Caco-2 (cell line): ENCODE measurements at regions of chr6 and their contacts with region 1.

Region 1: GRCh38 chr6:137313928-137314855 is 95.0 kb upstream of the IFNGR1 start:
- DNase-seq: peak; percentile 60 to 62
- H3K4me3 ChIP-seq: no peak overlapping the region
- H3K4me3 Mint-ChIP-seq: no peak overlapping the region
- H3K27ac Mint-ChIP-seq: no peak overlapping the region
- H3K4me1 ChIP-seq: no peaks in the 10 kb centered on the region; the same call in 1 of the 2 replicates
- H3K4me1 Mint-ChIP-seq: no peaks in the 10 kb centered on the region
- H3K27me3 ChIP-seq: no peaks in the 10 kb centered on the region
- H3K27me3 Mint-ChIP-seq: no peaks in the 10 kb centered on the region
- CTCF ChIP-seq: peak; percentile 78

Region 2: DNA sequence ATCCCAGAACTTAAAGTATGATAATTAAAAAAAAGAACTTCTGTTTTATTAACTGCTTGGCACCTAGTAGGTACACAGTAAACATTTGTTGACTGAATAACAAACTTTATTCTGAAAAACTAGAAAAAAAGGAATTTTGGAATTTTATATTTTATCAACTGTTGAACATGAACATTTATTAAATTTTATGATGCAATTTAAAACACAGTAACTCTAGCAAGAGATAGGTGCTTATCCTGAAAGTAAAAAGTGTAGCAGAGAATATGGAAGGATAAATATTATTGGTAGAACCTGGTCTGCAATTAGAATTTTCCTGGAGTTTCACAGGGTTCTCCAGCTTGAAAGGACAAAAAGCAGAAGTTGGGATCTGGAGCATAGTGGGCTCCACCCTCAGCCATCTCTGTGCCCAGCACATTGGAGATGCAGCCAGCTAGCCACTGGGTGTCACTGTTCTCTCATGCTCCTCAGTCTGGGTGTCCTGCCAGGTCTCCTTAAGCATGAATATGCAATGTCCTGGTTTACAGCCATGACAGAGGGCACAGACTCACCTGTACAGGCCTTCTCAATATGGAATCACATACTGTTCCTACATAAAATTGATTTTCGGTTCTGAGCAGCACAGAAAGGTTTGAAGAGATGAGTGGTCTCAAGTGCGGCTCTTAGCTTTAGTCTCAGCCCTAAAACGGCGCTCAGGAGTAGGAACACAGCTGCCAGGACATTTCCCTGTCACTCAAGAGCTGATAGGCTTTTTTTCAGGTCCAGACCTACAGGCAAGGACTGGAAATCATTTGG is 237.7 kb before region 1 on chr6:
- CTCF ChIA-PET with region 1: interaction called, 4 read pairs
- POLR2A ChIA-PET with region 1: no interaction called
- intact Hi-C with region 1: loop called (anchors 1 kb)
- DNase-seq: peak; percentile 80 to 83
- H3K4me3 ChIP-seq: no peak overlapping the region
- H3K4me3 Mint-ChIP-seq: no peak overlapping the region
- H3K27ac Mint-ChIP-seq: no peak overlapping the region
- H3K4me1 ChIP-seq: no peaks in the 10 kb centered on the region
- H3K4me1 Mint-ChIP-seq: no peaks in the 10 kb centered on the region
- H3K27me3 ChIP-seq: no peaks in the 10 kb centered on the region
- H3K27me3 Mint-ChIP-seq: peaks cover 6% of the 10 kb centered on the region
- CTCF ChIP-seq: peak; percentile 68 to 85

Region 3: GRCh38 chr6:137218917-137219663 is 95.1 kb before region 1 on chr6 and contains the start of gene IFNGR1:
- CTCF ChIA-PET with region 1: interaction called, 3 read pairs
- POLR2A ChIA-PET with region 1: no interaction called
- intact Hi-C with region 1: loop called (anchors 1 kb)
- DNase-seq: peak; percentile 97 to 98
- H3K4me3 ChIP-seq: peak within 1 kb of the TSS; percentile 75
- H3K4me3 Mint-ChIP-seq: peak within 1 kb of the TSS; percentile 99
- H3K27ac Mint-ChIP-seq: peak within 1 kb of the TSS; percentile 96
- H3K4me1 ChIP-seq: peaks cover 19% of the 10 kb centered on the region
- H3K4me1 Mint-ChIP-seq: peaks cover 33% of the 10 kb centered on the region
- H3K27me3 ChIP-seq: no peaks in the 10 kb centered on the region
- H3K27me3 Mint-ChIP-seq: no peaks in the 10 kb centered on the region
- CTCF ChIP-seq: no peak
- total RNA-seq, gene IFNGR1: 56.9 and 58.0 TPM in 2 replicates

Region 4: DNA sequence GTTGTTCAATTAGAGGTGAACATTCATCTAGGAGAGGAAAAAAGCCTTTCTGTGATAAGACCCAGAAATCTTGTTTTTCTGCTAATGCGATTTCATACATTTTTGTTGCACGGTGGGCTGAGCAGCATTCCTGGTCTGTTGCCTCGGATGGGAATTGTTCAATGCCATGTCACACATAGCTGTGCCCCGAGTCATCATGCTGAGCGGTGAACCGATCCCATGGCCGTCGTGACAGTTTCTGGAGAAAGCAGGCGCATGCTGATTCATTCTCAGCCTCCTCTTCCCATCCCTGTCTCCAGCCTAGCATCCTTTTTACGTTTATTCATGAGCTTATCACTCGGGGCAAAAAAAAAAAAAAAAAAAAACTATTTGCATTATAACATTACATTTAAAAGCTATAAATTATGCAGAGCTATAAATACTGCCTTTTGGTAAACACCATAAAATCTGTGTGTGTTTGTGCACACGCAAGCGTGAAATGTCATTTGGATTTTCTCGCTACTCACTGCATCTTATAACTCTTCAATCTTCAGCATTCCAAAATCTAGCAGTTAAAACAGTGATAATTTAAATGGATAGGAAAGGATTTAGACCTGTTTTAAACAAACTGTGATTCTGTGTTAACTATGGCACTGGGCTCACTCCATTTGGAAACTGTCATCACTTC is 36.1 kb before region 1 on chr6:
- CTCF ChIA-PET with region 1: interaction called, 3 read pairs
- POLR2A ChIA-PET with region 1: no interaction called
- intact Hi-C with region 1: loop called (anchors 2 kb)
- DNase-seq: peak; percentile 71 to 75
- H3K4me3 ChIP-seq: no peak overlapping the region
- H3K4me3 Mint-ChIP-seq: no peak overlapping the region
- H3K27ac Mint-ChIP-seq: no peak overlapping the region
- H3K4me1 ChIP-seq: peaks cover 18% of the 10 kb centered on the region
- H3K4me1 Mint-ChIP-seq: peaks cover 6% of the 10 kb centered on the region
- H3K27me3 ChIP-seq: no peaks in the 10 kb centered on the region
- H3K27me3 Mint-ChIP-seq: no peaks in the 10 kb centered on the region
- CTCF ChIP-seq: no peak

Region 5: GRCh38 chr6:137387096-137387764 is 73.0 kb after region 1 on chr6:
- CTCF ChIA-PET with region 1: no interaction called
- POLR2A ChIA-PET with region 1: no interaction called
- intact Hi-C with region 1: no loop called
- DNase-seq: no peak
- H3K4me3 ChIP-seq: no peak overlapping the region
- H3K4me3 Mint-ChIP-seq: no peak overlapping the region
- H3K27ac Mint-ChIP-seq: no peak overlapping the region
- H3K4me1 ChIP-seq: no peaks in the 10 kb centered on the region
- H3K4me1 Mint-ChIP-seq: no peaks in the 10 kb centered on the region
- H3K27me3 ChIP-seq: no peaks in the 10 kb centered on the region
- H3K27me3 Mint-ChIP-seq: no peaks in the 10 kb centered on the region
- CTCF ChIP-seq: no peak

Region 6: DNA sequence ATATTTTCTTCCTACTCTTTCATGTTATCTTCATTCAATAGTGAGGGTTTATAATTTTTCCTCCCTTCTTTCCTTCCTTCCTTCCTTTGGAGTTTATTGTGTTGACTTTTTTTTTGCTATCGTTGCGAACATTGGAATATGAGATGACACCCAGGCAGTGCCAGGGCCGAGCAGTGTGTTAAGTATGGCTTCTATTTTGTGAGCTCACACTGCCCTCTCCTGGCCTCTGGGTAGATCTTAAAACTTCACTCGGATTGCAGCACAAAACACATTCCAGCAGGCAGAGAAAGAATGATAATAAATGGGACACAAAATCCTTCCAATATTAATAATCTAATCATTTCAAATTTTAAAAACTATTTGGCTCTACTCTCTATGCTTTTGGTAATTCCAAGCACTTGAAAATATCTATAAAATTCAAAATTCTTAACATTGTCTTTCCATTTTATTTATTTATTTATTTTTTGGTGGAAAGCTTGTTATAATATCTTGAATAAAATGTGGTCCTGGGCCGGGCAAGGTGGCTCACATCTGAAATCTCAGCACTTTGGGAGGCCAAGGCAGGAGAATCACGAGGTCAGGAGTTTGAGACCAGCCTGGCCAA is 327.4 kb after region 1 on chr6:
- CTCF ChIA-PET with region 1: interaction called, 7 read pairs
- POLR2A ChIA-PET with region 1: no interaction called
- intact Hi-C with region 1: loop called (anchors 1 kb)
- DNase-seq: peak; percentile 67 to 69
- H3K4me3 ChIP-seq: no peak overlapping the region
- H3K4me3 Mint-ChIP-seq: no peak overlapping the region
- H3K27ac Mint-ChIP-seq: no peak overlapping the region
- H3K4me1 ChIP-seq: peaks cover 20% of the 10 kb centered on the region
- H3K4me1 Mint-ChIP-seq: peaks cover 4% of the 10 kb centered on the region
- H3K27me3 ChIP-seq: no peaks in the 10 kb centered on the region
- H3K27me3 Mint-ChIP-seq: no peaks in the 10 kb centered on the region
- CTCF ChIP-seq: peak; percentile 65 to 74

Region 7: DNA sequence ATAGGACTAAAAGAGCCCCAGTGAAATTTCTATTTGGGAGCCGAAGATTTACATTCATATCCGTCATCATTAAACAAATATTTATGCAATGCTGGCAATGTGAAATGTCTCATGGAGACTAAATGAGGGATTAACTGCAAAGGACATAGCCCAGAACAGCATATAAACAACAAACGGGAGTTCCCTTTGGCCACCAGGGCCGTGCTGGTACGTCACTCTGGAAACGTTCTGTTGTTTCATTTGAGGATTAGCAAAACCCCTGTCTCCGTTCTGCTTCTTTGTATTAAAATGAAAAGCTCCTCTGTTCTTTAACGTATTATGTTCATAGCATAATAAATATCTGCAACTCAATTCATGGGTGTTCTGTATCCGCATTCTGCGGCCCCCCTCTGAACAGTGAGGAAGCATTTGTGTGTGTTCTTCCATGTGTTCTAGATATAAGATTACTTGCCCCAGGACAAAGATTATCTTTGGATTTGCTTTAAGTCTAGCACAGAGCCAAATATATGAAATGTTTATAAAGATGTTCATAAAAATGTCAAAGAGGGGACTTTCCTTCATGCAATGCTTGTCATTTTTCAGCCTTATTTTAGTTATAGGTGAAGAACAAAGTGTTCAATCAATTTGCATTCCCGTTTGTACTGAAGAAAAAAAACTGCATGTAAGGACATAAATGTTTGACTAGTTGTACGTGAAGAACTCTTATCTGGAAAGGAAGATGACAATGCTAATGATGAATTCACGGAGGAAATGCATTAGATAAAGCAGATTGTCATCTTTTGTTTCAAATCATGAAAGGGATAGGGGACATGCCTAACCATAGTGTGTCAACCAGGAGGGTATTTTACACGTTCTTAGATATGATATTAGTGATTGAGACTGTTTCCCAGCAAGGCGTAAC is 462.8 kb after region 1 on chr6:
- CTCF ChIA-PET with region 1: no interaction called
- POLR2A ChIA-PET with region 1: no interaction called
- intact Hi-C with region 1: no loop called
- DNase-seq: no peak
- H3K4me3 ChIP-seq: no peak overlapping the region
- H3K4me3 Mint-ChIP-seq: no peak overlapping the region
- H3K27ac Mint-ChIP-seq: no peak overlapping the region
- H3K4me1 ChIP-seq: peaks cover 15% of the 10 kb centered on the region
- H3K4me1 Mint-ChIP-seq: peaks cover 8% of the 10 kb centered on the region
- H3K27me3 ChIP-seq: no peaks in the 10 kb centered on the region
- H3K27me3 Mint-ChIP-seq: no peaks in the 10 kb centered on the region
- CTCF ChIP-seq: no peak